Activated CD4-positive, alpha-beta memory T cell treated with anti-CD3 and anti-CD28 coated beads for 36 hours (primary cell): ENCODE measurements at regions of chr6 and their contacts with region 1.

Region 1: DNA sequence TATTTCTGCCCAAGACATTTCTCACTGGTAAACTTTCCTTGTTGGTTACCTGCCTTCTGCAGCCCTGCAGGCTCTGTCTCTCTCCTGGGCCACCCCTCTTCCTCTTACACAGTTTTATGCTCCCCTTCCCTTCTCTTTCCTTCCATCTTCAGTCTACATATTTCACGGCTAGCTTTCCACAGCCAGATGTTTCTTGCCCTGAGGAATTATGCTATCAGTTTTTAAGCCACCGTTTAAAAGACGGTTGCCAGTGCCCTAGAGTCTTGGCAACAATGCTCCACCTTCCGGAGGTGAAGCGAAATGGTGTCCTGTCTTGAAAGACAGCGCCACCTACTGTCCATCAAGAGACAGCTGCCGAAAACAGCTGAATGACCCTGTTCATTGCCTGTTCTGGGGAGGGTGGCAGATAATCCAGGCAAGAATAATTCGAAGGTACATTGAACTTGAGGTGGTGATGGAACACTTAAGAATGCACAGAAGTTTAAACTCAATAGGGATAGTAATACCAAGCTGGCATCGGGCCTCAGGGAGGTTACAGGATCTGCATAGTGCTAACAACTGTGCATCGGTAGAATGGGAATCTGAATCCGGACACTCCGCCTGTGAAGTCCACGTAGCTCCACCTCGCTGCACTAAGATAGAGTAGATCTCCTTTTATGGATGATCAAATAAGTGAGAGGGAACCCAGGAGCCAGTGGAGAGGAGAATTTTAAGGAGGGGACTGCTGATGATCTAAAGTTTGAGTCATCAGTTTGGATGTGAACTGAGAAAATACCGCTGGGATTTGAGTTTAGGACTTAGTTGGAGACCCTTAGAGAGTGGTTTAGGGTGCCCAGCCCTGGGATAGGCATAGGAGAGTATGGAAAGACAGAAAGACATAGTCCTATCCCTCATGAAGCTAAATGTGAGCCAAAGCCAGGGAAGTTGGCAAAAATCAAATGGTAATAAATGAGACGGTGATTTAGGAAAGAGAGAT is 4.8 kb upstream of the TRIM40 start:
- DNase-seq: peak; percentile 73
- H3K4me3 Mint-ChIP-seq: peak overlapping the region; percentile 9
- H3K27ac Mint-ChIP-seq: no peak overlapping the region
- H3K4me1 Mint-ChIP-seq: peaks cover 30% of the 10 kb centered on the region
- H3K27me3 Mint-ChIP-seq: peaks cover 60% of the 10 kb centered on the region

Region 2: GRCh38 chr6:30061092-30061857 is 69.9 kb before region 1 on chr6 and contains the start of gene POLR1H:
- CTCF ChIA-PET with region 1: interaction called, 18 read pairs
- POLR2A ChIA-PET with region 1: no interaction called
- intact Hi-C with region 1: loop called (anchors 5 kb)
- DNase-seq: peak; percentile 92
- H3K4me3 Mint-ChIP-seq: peak within 1 kb of the TSS; percentile 99
- H3K27ac Mint-ChIP-seq: peak within 1 kb of the TSS; percentile 99
- H3K4me1 Mint-ChIP-seq: peaks cover 35% of the 10 kb centered on the region
- H3K27me3 Mint-ChIP-seq: no peaks in the 10 kb centered on the region
- total RNA-seq, gene POLR1H: 69.4 to 73.2 TPM

Region 3: GRCh38 chr6:30075987-30076311 is 55.2 kb before region 1 on chr6:
- CTCF ChIA-PET with region 1: interaction called, 12 read pairs
- POLR2A ChIA-PET with region 1: no interaction called
- intact Hi-C with region 1: no loop called
- DNase-seq: no peak
- H3K4me3 Mint-ChIP-seq: no peak overlapping the region
- H3K27ac Mint-ChIP-seq: no peak overlapping the region
- H3K4me1 Mint-ChIP-seq: peaks cover 39% of the 10 kb centered on the region
- H3K27me3 Mint-ChIP-seq: peaks cover 30% of the 10 kb centered on the region

Region 4: DNA sequence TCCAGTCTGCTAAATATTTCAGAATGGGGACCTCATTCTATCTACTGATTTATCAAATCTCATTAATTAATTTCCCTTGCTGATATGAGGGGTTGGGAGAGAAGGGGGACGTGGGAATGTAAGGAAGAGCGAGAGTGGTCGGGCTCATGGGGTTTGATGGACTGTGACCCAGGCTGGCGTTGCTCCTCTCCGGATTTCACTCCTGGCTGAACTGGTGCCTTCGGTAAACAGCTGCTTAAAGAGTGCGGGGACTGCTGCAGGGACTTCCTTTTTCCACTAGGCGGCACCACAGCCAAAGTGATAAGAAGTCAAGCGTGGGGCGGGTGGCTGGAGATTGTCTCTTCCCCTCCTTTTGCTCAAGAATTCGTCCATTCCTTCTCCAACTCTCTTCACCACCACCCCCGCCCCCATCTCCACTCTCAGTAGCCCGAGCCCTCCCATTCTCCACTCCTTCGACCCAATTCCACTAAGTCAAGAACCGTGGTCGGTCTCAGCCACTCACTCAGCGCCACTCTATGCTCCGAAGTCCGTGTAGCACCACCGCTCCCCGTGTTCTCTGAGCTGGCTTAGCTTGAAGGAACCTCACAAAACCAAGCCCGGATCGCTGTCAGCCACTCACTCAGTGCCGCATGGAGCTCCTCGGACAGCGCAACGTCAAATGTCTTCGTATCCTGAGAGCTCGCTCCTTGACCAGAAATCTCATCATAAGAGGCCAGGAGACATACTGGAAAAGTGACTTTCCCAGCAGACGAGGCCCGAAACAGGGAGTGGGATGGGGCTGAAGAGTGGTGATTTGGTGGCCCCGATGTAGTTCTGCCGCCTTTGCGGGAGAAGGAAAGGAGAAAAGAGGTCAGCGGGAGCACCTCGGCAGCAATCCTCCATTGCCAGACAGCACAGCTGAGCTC is 28.0 kb before region 1 on chr6:
- CTCF ChIA-PET with region 1: interaction called, 491 read pairs
- POLR2A ChIA-PET with region 1: interaction called, 5 read pairs
- intact Hi-C with region 1: loop called (anchors 1 kb)
- DNase-seq: peak; percentile 91
- H3K4me3 Mint-ChIP-seq: peak overlapping the region; percentile 73
- H3K27ac Mint-ChIP-seq: no peak overlapping the region
- H3K4me1 Mint-ChIP-seq: peaks cover 41% of the 10 kb centered on the region
- H3K27me3 Mint-ChIP-seq: peaks cover 41% of the 10 kb centered on the region

Region 5: GRCh38 chr6:30143780-30144179 is 12.6 kb after region 1 on chr6:
- CTCF ChIA-PET with region 1: interaction called, 65 read pairs
- POLR2A ChIA-PET with region 1: interaction called, 3 read pairs
- intact Hi-C with region 1: no loop called
- DNase-seq: no peak
- H3K4me3 Mint-ChIP-seq: no peak overlapping the region
- H3K27ac Mint-ChIP-seq: no peak overlapping the region
- H3K4me1 Mint-ChIP-seq: no peaks in the 10 kb centered on the region
- H3K27me3 Mint-ChIP-seq: peaks cover 48% of the 10 kb centered on the region

Region 6: DNA sequence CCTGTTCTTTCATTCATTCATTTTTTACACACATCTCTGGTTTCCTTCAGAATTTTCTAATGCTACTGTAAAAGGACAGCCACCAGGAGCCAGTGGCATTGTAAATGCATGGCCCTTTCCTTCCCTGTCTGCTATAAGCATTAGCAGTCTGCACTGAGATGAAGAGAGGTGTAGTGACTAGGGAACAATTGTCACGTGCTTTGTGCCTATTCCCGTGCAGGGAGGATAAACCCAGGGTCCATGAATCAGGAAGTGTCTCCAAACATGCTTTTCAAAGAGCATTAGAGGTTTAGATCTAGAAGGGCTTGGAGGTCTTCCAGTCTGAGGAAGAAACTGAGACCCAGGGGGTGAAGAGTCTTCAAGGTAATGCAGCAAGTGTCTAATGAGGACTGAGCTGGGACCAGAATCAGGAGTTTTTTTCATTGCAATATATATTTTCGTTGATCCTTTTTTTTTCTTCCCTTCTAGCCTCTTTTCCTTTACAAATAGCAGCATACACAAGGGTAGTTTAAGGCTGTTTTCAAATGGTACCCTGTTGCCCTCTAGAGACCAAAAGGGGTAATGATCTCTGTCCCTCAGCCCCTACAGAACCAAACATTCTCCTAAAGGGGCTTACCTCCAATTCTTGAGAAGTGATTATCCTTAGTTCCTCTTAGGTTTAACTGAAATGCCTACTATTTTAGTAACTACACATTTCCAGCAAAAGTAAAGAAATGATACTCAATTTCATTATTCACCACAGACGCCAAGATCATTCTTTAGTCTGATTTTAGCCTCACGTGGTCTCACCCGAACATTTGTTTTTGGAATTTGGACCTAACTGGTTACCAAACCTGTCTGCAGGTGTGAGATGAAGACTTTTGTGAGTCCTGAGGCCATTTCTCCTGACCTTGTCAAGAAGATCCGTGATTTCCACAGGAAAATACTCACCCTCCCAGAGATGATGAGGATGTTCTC is 38.8 kb after region 1 on chr6:
- CTCF ChIA-PET with region 1: interaction called, 16 read pairs
- POLR2A ChIA-PET with region 1: interaction called, 4 read pairs
- intact Hi-C with region 1: loop called (anchors 2 kb)
- DNase-seq: no peak
- H3K4me3 Mint-ChIP-seq: no peak overlapping the region
- H3K27ac Mint-ChIP-seq: no peak overlapping the region
- H3K4me1 Mint-ChIP-seq: peaks cover 26% of the 10 kb centered on the region
- H3K27me3 Mint-ChIP-seq: peaks cover 35% of the 10 kb centered on the region